Aorta (tissue), 5 donors: ENCODE measurements at regions of chr9 and their contacts with region 1.

Region 1: DNA sequence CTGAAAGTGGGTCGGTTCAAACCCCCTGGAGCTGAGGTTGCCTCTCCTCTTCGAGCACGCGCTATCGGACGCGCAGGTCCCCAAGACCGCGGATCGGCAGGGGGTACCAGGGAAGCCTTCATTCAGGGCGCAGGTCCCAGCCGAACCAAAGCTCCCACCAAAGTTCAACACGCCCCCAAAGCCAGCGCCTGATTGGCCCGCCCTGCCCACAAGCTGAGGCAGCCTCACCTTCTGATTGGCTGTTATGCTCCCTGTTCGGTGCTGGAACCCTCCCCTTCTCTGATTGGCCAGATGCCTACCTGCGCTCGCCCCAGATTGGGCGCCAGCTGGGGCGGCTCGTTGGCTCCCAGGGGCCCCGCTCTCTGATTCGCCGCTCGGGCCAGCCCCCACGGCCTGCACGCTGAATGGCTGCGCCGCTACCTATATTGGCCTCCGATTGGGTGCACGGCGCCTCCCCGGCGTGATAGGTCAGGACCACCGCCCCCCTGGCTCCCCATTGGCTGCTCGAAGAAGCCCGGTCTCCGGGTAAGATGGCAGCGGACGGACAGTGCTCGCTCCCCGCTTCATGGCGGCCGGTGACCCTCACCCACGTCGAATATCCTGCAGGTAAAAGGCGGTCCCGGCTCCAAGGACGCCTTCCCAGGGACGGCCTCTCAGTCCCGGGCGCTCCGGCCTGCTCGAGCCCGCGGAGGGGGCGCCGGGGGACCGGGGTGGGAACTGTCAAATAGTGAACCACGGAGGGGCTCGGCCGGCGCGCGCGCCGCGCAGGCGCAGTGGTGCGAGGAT is at the start of gene DOLPP1:
- DNase-seq: peak; percentile 99 to 100
- ATAC-seq: peak; percentile 99
- H3K4me3 ChIP-seq: peak within 1 kb of the TSS; percentile 63 to 70
- H3K27ac ChIP-seq: peak within 1 kb of the TSS in 1 of 2 donors; percentile 55
- H3K4me1 ChIP-seq: no peaks in the 10 kb centered on the region
- H3K27me3 ChIP-seq: no peaks in the 10 kb centered on the region
- total RNA-seq, gene DOLPP1: 4.0 to 5.1 TPM

Region 2: GRCh38 chr9:128607642-128608350 is 473.0 kb before region 1 on chr9:
- intact Hi-C with region 1: no loop called
- DNase-seq: peak; percentile 92 to 94
- ATAC-seq: peak; percentile 90
- H3K4me3 ChIP-seq: no peak overlapping the region
- H3K27ac ChIP-seq: peak overlapping the region; percentile 24 to 49
- H3K4me1 ChIP-seq: no peaks in the 10 kb centered on the region
- H3K27me3 ChIP-seq: no peaks in the 10 kb centered on the region

Region 3: GRCh38 chr9:129036241-129036922 is 44.4 kb before region 1 on chr9 and contains the start of gene MIGA2:
- intact Hi-C with region 1: loop called in 1 of 2 experiments (anchors 2 kb)
- DNase-seq: peak; percentile 97 to 98
- ATAC-seq: peak; percentile 98
- H3K4me3 ChIP-seq: peak within 1 kb of the TSS; percentile 68 to 85
- H3K27ac ChIP-seq: peak within 1 kb of the TSS in 1 of 2 donors; percentile 58
- H3K4me1 ChIP-seq: no peaks in the 10 kb centered on the region
- H3K27me3 ChIP-seq: no peaks in the 10 kb centered on the region
- total RNA-seq, gene MIGA2: 21.8 to 28.3 TPM

Region 4: DNA sequence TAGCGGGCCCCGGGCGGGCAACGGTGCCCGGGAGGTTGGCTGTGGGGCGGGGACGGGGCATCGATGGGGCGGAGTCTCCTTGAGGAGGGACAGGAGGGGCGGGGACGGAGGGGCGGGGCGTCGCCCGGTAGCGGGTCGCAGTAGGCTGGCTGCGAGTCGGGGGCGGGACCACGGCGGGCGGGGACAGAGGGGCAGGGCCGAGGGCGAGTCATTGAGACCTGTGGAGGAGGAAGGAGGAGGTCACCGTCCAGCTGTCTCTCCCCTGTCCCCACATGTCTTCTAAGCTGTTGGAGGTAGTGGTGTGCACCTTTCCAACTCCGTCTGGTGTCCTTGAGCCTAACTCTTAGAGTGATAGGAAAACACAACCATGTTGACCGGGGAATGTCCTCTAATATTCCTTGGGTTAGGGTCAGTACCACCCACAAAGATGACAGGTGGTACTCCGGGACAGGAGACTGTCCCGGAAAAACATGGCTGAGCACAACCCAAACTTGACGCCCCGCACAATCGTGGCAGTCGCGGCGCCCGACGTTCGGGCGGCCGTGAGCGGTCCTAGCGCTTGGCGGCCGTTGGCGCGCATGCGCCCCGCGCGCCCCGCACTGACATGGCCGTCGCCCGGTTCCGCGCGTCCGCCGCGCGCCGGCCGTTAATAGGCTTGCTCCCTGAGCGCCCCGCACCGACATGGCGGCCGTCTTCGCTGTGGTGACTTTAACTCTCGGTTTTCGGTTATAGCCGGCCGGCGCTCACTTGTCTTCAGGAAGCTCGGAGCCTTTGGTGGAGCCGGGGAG is 30.1 kb after region 1 on chr9 and contains the starts of genes CRAT and PTPA:
- intact Hi-C with region 1: loop called in 1 of 2 experiments (anchors 2 kb)
- DNase-seq: peak; percentile 99
- ATAC-seq: peak; percentile 94
- H3K4me3 ChIP-seq: peak within 1 kb of the TSS; percentile 82 to 90
- H3K27ac ChIP-seq: peak within 1 kb of the TSS in 1 of 2 donors; percentile 94
- H3K4me1 ChIP-seq: no peaks in the 10 kb centered on the region
- H3K27me3 ChIP-seq: no peaks in the 10 kb centered on the region
- total RNA-seq, gene CRAT: 42.0 to 48.4 TPM
- total RNA-seq, gene PTPA: 80.3 to 156 TPM